ACHN (cell line): ENCODE measurements at regions of chr16 and their contacts with region 1.

Region 1: DNA sequence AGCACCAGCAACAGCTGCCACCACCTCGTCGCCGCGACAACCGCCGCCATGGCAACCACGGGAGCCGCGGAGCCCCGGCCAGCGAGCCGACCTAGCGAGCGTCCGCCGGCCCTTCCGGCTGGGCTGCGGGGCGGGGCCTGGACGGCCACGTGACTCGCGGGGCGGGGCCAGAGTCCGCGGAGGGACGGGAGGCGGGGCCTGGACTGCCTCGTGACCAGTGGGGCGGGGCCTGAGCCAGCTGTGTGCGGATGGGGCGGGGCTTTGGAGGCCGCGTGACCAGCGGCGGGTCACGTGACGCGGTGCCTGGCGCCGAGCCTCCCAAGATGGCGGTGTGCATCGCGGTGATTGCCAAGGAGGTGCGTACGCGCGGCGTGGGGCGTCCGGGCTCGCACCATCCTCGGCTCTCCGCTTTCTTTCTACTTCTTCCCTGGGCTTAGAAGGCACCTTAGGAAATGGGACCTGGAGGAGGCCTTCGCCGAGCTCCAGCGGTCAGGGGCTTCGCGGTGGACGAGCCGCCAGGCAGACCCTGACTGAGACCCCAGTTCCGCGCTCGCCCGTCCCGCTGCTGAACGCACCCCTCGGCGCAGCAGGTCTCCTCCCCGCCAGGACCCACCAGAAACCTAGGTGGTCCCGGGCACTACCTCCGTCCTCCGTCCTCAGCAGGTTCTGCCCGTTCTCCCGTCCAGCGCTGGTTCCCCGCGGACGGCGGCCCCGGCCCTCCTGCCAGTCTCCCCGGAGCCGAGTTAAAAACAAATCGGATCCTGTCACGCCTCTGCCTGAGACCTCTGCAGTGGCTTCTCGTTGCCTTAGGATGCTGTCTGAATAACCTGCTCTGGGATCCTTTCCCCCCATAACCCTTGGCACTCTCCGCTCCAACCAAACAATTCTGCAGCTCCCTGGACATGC is at the starts of genes GALNS and TRAPPC2L:
- DNase-seq: peak; percentile 97

Region 2: GRCh38 chr16:88770461-88771293 is 86.4 kb before region 1 on chr16:
- in situ Hi-C with region 1: loop called (anchors 25 kb)
- DNase-seq: peak; percentile 98